Caco-2 (cell line): ENCODE measurements at regions of chr7 and their contacts with region 1.

Region 1: DNA sequence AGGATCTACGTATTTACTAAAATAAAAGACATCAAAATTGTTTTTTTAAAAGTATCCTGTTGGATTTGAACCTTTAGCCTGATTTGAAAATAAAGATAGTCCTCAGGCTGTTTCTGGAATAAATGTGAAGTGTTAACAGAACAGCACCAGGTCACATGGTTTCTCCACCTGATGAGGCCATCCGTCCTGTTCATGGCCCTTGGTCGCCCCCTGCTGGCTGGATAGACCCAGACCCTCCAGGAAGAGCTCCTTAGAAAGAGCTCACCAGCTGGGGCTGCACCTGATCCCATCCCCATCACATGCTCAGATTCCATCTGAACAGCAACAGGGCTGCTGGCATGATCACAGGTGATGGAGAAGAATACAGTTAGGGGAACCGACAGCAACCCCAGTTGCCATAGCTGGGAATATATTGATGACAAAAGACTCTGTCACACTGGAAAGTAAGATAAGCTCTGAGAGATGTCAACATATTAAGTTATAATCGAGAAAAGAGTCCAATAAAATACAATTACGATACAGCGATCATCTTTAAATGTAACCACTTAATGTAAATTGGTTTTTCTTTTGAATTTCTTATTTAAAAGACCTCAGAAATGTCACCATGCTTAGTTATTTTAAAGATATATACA is 4.8 kb downstream of the OR2A14 start:
- DNase-seq: peak; percentile 91 to 95
- H3K4me3 ChIP-seq: no peak overlapping the region
- H3K4me3 Mint-ChIP-seq: no peak overlapping the region
- H3K27ac Mint-ChIP-seq: no peak overlapping the region
- H3K4me1 ChIP-seq: no peaks in the 10 kb centered on the region
- H3K4me1 Mint-ChIP-seq: no peaks in the 10 kb centered on the region
- H3K27me3 ChIP-seq: no peaks in the 10 kb centered on the region
- H3K27me3 Mint-ChIP-seq: no peaks in the 10 kb centered on the region
- CTCF ChIP-seq: peak; percentile 94 to 97

Region 2: DNA sequence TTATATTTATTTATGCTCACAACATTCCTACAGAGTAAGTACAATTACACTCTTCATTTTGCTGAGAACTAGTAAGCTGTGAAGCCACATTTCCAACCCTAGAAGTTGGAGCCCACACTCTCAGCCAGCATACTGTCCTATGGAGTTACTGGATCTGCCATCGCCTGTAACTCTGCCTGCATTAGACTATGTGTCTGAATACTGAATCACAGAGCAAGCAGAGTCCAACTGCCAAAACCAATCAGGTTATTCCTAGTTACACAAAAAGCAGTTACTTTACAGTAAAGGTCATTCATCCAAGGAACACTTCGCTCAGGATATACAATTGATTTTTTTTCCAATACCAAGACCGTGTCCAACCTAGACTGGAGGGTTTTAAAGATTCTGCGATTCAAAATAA is 391.9 kb before region 1 on chr7:
- CTCF ChIA-PET with region 1: interaction called, 16 read pairs
- POLR2A ChIA-PET with region 1: no interaction called
- intact Hi-C with region 1: no loop called
- DNase-seq: no peak
- H3K4me3 ChIP-seq: no peak overlapping the region
- H3K4me3 Mint-ChIP-seq: no peak overlapping the region
- H3K27ac Mint-ChIP-seq: no peak overlapping the region
- H3K4me1 ChIP-seq: no peaks in the 10 kb centered on the region
- H3K4me1 Mint-ChIP-seq: no peaks in the 10 kb centered on the region
- H3K27me3 ChIP-seq: no peaks in the 10 kb centered on the region
- H3K27me3 Mint-ChIP-seq: peaks cover 15% of the 10 kb centered on the region
- CTCF ChIP-seq: no peak

Region 3: GRCh38 chr7:144027070-144027469 is 100.7 kb before region 1 on chr7:
- CTCF ChIA-PET with region 1: interaction called, 4 read pairs
- POLR2A ChIA-PET with region 1: no interaction called
- intact Hi-C with region 1: loop called (anchors 1 kb)
- DNase-seq: no peak
- H3K4me3 ChIP-seq: no peak overlapping the region
- H3K4me3 Mint-ChIP-seq: no peak overlapping the region
- H3K27ac Mint-ChIP-seq: no peak overlapping the region
- H3K4me1 ChIP-seq: peaks cover 36% of the 10 kb centered on the region
- H3K4me1 Mint-ChIP-seq: peaks cover 27% of the 10 kb centered on the region
- H3K27me3 ChIP-seq: no peaks in the 10 kb centered on the region
- H3K27me3 Mint-ChIP-seq: no peaks in the 10 kb centered on the region
- CTCF ChIP-seq: peak; percentile 40 to 59

Region 4: GRCh38 chr7:144048648-144049047 is 79.2 kb before region 1 on chr7 and contains the start of gene OR2A5:
- CTCF ChIA-PET with region 1: interaction called, 10 read pairs
- POLR2A ChIA-PET with region 1: no interaction called
- intact Hi-C with region 1: no loop called
- DNase-seq: no peak
- H3K4me3 ChIP-seq: no peak within 1 kb of the TSS
- H3K4me3 Mint-ChIP-seq: no peak within 1 kb of the TSS
- H3K27ac Mint-ChIP-seq: no peak within 1 kb of the TSS
- H3K4me1 ChIP-seq: no peaks in the 10 kb centered on the region
- H3K4me1 Mint-ChIP-seq: peaks cover 12% of the 10 kb centered on the region
- H3K27me3 ChIP-seq: no peaks in the 10 kb centered on the region
- H3K27me3 Mint-ChIP-seq: no peaks in the 10 kb centered on the region
- CTCF ChIP-seq: no peak
- total RNA-seq, gene OR2A5: not detected in 2 replicates